ENCODE measurements at regions of chr6 and their contacts with region 1.

Region 1: DNA sequence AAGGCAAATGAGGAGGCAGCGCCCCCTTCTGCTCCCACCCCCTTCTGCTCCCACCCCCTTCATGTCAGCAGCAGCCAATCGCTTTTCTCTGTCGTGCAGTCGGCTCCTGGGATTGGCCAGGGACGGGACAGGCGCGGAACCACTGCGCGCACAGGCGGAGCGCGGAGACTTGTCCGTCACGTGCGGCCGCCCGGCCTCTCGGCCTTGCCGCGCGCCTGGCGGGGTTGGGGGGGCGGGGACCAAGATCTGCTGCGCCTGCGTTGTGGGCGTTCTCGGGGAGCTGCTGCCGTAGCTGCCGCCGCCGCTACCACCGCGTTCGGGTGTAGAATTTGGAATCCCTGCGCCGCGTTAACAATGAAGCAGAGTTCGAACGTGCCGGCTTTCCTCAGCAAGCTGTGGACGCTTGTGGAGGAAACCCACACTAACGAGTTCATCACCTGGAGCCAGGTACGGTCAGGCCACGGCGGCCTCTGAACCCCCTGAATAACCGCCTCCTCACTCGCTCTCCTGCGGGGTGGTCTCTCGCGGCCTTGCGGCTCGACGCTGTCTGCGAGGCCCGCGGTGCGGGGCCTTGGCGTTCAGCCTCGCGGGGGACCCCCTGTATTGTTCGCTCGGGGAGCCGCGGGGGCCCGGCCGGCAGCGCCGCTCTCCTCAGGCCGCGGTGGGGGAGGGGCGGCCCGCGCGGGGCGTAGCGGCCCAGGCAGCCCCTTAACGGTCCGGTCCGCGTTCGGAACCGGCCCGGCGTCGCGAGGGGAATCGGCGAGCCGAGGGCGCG is at the start of gene HSF2:
- DNase-seq: peak; percentile 97 to 98 (median 98)
- ATAC-seq: peak; percentile 100
- H3K4me3 ChIP-seq: peak within 1 kb of the TSS; percentile 80
- H3K27ac ChIP-seq: peak within 1 kb of the TSS; percentile 83
- H3K4me1 ChIP-seq: no peaks in the 10 kb centered on the region
- H3K27me3 ChIP-seq: no peaks in the 10 kb centered on the region
- total RNA-seq, gene HSF2: 21.6 to 42.9 (median 41.8) TPM

Region 2: DNA sequence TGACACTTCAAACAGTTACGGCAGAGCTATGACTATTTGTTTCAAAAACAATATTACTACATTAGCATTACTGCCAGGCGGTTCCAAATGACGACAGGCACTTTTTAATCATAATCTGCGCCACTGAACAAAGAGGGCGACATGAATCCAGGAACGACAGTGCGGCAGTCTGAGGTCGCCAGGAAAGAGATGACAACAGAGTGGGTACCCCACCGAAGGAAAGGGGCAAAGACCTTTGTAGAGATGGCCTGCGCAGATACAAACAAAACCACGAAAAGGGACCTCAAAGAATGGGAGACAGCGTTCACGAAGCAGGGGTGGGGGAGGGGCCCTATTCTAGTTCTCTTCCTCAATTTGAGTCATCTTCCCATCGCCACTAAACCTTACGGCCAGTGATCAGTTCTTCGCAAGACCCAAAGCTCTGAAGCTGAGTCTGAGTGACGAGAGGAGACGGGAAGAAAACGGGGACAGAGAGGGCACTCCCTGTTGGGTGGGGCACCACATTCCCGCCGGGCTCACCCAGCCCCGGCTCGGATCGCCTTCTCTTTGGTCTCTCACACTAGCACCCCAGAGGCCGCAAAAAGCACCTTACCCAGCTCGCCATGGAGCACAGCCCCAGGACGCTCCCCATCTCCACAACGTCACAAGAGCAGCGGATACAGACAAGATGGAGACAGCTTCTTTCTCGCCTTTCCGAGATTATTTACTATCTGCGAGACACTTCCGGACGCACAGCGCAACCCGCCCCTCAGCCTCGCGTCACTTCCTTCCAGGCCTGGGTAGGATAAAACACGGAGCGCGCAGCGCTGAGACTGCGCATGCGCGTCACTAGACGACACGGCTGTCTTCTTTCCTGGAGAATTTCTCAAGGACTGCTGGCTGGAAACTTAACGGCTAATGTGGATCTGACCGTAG is 71.8 kb after region 1 on chr6 and contains the start of gene SERINC1:
- intact Hi-C with region 1: loop called in 1 of 4 experiments (anchors 10 kb)
- DNase-seq: peak; percentile 95 to 98 (median 97)
- ATAC-seq: peak; percentile 99 to 100
- H3K4me3 ChIP-seq: peak within 1 kb of the TSS; percentile 79
- H3K27ac ChIP-seq: peak within 1 kb of the TSS; percentile 90
- H3K4me1 ChIP-seq: peaks cover 2% of the 10 kb centered on the region
- H3K27me3 ChIP-seq: no peaks in the 10 kb centered on the region
- total RNA-seq, gene SERINC1: 200 to 231 (median 201) TPM